ENCODE measurements at regions of chr5 and their contacts with region 1.

Region 1: DNA sequence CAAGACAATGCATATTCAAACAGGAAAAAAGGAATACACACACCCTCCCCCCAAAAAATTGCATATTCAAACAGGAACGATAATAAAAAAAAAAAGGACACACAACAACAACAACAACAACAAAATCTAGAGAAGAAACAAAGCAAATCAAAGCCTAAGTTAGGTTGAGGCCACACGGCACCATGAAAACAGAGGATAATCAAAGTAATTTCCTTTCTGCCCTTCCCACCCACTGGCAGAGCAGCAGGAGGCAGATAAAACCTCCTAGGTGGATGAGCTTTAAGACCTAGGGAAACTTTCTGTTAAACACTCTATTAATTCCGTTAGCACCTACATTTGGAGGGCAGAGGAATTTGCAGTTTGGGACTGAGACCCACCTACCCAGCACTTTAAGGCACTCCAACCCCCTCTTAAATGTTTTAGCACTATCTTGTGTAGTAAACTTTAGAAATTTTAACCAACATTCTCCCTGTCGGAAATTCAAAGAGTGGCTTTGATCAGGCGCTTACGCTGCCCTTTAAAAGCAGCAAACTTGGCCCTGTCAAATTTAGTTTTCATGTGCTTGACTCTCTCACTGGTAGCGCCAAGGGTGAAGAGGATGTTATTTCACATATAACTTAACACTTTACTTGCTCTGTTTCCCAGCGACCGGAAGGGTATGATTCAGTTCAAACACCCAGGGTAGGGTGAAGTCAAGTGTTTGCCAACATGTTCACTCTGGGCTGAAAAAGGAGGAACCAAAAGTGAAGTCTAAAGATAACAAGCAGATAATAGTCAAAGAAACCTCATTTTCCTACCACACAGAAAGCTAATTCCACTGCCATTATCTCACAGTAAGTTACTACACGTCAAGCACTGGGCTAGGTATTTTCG is 9.2 kb downstream of the ENC1 start:
- DNase-seq: no peak
- ATAC-seq: peak; percentile 93
- H3K4me3 Mint-ChIP-seq: peak overlapping the region; percentile 58
- H3K27ac Mint-ChIP-seq: peak overlapping the region; percentile 83
- H3K4me1 Mint-ChIP-seq: peaks cover 33% of the 10 kb centered on the region
- H3K27me3 Mint-ChIP-seq: no peaks in the 10 kb centered on the region
- CTCF ChIP-seq: no peak

Region 2: GRCh38 chr5:74232281-74232680 is 399.0 kb before region 1 on chr5:
- CTCF ChIA-PET with region 1: no interaction called
- POLR2A ChIA-PET with region 1: no interaction called
- intact Hi-C with region 1: no loop called
- DNase-seq: no peak
- ATAC-seq: no peak
- H3K4me3 Mint-ChIP-seq: no peak overlapping the region
- H3K27ac Mint-ChIP-seq: no peak overlapping the region
- H3K4me1 Mint-ChIP-seq: no peaks in the 10 kb centered on the region
- H3K27me3 Mint-ChIP-seq: peaks cover 9% of the 10 kb centered on the region
- CTCF ChIP-seq: no peak

Region 3: GRCh38 chr5:74490811-74491210 is 140.5 kb before region 1 on chr5:
- CTCF ChIA-PET with region 1: no interaction called
- POLR2A ChIA-PET with region 1: interaction called, 5 read pairs
- intact Hi-C with region 1: loop called (anchors 1 kb)
- DNase-seq: no peak
- ATAC-seq: peak; percentile 99
- H3K4me3 Mint-ChIP-seq: no peak overlapping the region
- H3K27ac Mint-ChIP-seq: peak overlapping the region; percentile 16
- H3K4me1 Mint-ChIP-seq: peaks cover 20% of the 10 kb centered on the region
- H3K27me3 Mint-ChIP-seq: peaks cover 14% of the 10 kb centered on the region
- CTCF ChIP-seq: no peak

Region 4: GRCh38 chr5:74596927-74597326 is 34.4 kb before region 1 on chr5:
- CTCF ChIA-PET with region 1: no interaction called
- POLR2A ChIA-PET with region 1: interaction called, 10 read pairs
- intact Hi-C with region 1: no loop called
- DNase-seq: no peak
- ATAC-seq: no peak
- H3K4me3 Mint-ChIP-seq: no peak overlapping the region
- H3K27ac Mint-ChIP-seq: no peak overlapping the region
- H3K4me1 Mint-ChIP-seq: no peaks in the 10 kb centered on the region
- H3K27me3 Mint-ChIP-seq: peaks cover 21% of the 10 kb centered on the region
- CTCF ChIP-seq: no peak

Region 5: GRCh38 chr5:74684900-74685851 is 53.9 kb after region 1 on chr5 and contains the start of gene HEXB:
- CTCF ChIA-PET with region 1: no interaction called
- POLR2A ChIA-PET with region 1: no interaction called
- intact Hi-C with region 1: loop called (anchors 2 kb)
- DNase-seq: peak; percentile 77
- ATAC-seq: peak; percentile 86
- H3K4me3 Mint-ChIP-seq: peak within 1 kb of the TSS; percentile 81
- H3K27ac Mint-ChIP-seq: peak within 1 kb of the TSS; percentile 63
- H3K4me1 Mint-ChIP-seq: peaks cover 18% of the 10 kb centered on the region
- H3K27me3 Mint-ChIP-seq: no peaks in the 10 kb centered on the region
- CTCF ChIP-seq: no peak
- total RNA-seq, gene HEXB: 34.5 and 43.2 TPM in 2 replicates